Panc1 (cell line): ENCODE measurements at regions of chr11 and their contacts with region 1.

Region 1: DNA sequence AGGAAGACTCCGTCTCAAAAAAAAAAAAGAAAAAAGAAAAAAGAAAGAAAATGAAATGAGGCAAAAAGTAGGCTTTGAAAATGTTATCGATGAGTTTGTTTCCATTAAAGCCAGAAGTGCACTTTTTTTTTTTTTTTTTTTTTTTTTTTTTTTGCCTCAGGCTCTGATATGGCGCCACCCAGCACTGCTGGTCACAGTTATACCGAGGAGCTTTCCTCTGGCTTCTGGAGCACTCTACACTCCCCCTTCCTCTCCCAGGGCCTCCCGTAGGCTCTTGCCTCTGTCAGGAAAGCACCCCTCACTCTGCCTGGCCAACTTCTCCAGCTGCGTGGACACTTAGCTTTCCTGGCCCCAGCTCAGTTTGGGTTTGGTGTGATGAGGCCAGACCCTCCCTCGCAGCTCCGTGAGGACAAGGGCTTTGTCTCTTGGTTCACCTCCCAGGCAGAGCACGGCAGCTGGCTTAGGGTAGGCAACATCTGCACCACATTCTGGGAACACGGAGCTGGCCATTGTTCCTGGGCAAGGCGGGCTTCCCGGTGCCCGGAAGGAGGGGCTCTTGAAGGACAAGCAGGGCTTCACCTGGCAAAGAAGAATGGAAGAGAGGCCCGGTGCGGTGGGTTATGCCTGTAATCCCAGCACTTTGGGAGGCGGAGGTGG is 16.9 kb downstream of the FADS2 start:
- DNase-seq: no peak
- ATAC-seq: no peak
- H3K4me3 ChIP-seq: no peak overlapping the region
- H3K27ac ChIP-seq: no peak overlapping the region
- H3K4me1 ChIP-seq: no peaks in the 10 kb centered on the region
- H3K27me3 ChIP-seq: no peaks in the 10 kb centered on the region
- CTCF ChIP-seq: no peak

Region 2: GRCh38 chr11:61509043-61510029 is 335.7 kb before region 1 on chr11:
- CTCF ChIA-PET with region 1: no interaction called
- POLR2A ChIA-PET with region 1: no interaction called
- in situ Hi-C with region 1: no loop called
- intact Hi-C with region 1: no loop called
- DNase-seq: no peak
- ATAC-seq: peak; percentile 93
- H3K4me3 ChIP-seq: no peak overlapping the region
- H3K27ac ChIP-seq: no peak overlapping the region
- H3K4me1 ChIP-seq: no peaks in the 10 kb centered on the region
- H3K27me3 ChIP-seq: peaks cover 4% of the 10 kb centered on the region; the same call in 1 of the 2 replicates
- CTCF ChIP-seq: peak; percentile 85

Region 3: DNA sequence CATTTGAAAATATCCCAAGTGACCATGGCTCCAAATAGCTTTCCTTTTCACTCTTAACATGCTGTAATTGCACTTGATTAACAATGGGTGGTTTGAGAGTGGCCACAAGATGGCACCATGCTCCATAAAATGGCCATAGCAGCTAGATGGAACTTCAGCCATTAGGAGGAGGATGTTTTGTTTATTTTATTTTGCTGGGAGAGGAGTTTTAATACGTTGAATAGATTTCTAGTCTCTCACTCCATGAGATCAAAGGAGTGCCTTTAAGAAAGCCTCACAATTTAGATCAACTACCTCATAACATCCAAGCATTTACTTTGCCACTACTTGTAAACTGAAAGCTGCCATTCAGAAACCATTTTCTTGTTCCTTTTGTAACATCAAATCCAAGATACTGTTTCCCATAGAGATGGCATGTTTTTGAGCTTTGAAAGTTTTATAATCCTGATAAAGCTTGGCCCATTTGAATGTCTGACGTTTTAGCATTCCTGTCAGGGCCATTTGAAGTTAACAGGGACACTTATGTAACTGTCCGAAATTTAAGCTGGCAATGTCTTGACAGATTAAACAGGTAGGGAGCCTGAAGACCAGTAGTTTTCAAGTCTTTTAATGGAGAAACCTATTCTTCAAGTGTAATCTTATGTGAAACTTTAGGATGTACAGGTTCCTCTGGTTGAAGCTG is 47.6 kb before region 1 on chr11:
- CTCF ChIA-PET with region 1: no interaction called
- POLR2A ChIA-PET with region 1: no interaction called
- in situ Hi-C with region 1: no loop called
- intact Hi-C with region 1: loop called (anchors 2 kb)
- DNase-seq: peak; percentile 67
- ATAC-seq: no peak
- H3K4me3 ChIP-seq: no peak overlapping the region
- H3K27ac ChIP-seq: 0 out of 2 replicates have a peak overlapping the region, but pooled peaks have one; percentile 27
- H3K4me1 ChIP-seq: peaks cover 9% of the 10 kb centered on the region; the same call in 1 of the 2 replicates
- H3K27me3 ChIP-seq: no peaks in the 10 kb centered on the region
- CTCF ChIP-seq: peak; percentile 82

Region 4: GRCh38 chr11:61827571-61828378 is 17.3 kb before region 1 on chr11 and contains the start of gene FADS2:
- CTCF ChIA-PET with region 1: no interaction called
- POLR2A ChIA-PET with region 1: no interaction called
- in situ Hi-C with region 1: no loop called
- intact Hi-C with region 1: no loop called
- DNase-seq: no peak
- ATAC-seq: peak; percentile 88
- H3K4me3 ChIP-seq: peak within 1 kb of the TSS; percentile 81 to 82
- H3K27ac ChIP-seq: peak within 1 kb of the TSS; percentile 92
- H3K4me1 ChIP-seq: peaks cover 33% of the 10 kb centered on the region
- H3K27me3 ChIP-seq: no peaks in the 10 kb centered on the region
- CTCF ChIP-seq: no peak
- total RNA-seq, gene FADS2: 679 TPM

Region 5: GRCh38 chr11:62147545-62147944 is 302.5 kb after region 1 on chr11:
- CTCF ChIA-PET with region 1: no interaction called
- POLR2A ChIA-PET with region 1: no interaction called
- in situ Hi-C with region 1: no loop called
- intact Hi-C with region 1: no loop called
- DNase-seq: no peak
- ATAC-seq: no peak
- H3K4me3 ChIP-seq: no peak overlapping the region
- H3K27ac ChIP-seq: no peak overlapping the region
- H3K4me1 ChIP-seq: no peaks in the 10 kb centered on the region
- H3K27me3 ChIP-seq: no peaks in the 10 kb centered on the region
- CTCF ChIP-seq: no peak